SK-N-SH (cell line): ENCODE measurements at regions of chr5 and their contacts with region 1.

Region 1: DNA sequence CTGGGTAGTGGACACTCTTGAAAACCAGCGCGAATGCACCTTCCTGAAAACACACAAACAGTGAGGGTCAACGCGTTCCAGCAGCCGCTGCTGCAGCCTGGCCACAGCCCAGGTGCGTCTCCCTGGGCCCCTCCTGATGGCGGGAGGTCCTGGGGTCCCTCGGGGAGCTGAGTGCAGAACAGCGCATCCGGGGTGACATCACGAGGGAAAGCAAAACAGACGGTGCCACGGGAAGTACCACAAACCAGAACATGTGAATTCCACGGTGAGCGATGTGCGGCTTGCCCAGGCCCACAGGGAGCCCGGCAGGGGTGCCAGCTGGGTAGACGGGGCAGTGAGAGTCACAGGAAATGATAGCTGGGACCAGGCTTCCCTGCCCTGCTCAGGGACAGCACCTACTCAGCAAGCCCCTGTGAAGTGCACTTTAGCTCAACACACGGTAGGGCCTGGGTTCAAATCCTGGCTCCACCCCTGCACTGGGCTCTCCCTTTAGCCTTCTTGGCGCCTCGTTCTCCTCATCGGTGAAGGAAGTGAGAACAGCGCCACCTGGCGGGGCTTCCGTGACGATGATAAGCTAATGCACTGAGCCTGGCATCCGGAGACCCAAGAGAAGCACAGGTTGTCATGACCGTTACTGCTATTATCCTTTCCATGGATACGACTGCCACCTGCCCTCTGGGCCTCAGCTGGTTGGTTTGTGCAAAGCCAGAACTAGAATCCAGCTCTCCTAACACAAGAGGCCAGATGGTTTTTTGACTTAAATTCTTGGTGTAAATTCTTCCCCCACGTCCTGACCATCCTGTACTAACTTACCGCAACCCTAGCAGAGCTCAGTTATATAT is 24.6 kb downstream of the GFPT2 start:
- DNase-seq: peak; percentile 87
- H3K4me3 ChIP-seq: no peak overlapping the region; a peak in 1 of 4 replicates
- H3K27ac ChIP-seq: no peak overlapping the region
- H3K4me1 ChIP-seq: peaks cover 0 to 12% of the 10 kb centered on the region in 2 experiments; a peak in 2 of 4 replicates
- H3K27me3 ChIP-seq: no peaks in the 10 kb centered on the region
- CTCF ChIP-seq: peak; percentile 81
- EP300 ChIP-seq: no peak
- RAD21 ChIP-seq: peak; percentile 73

Region 2: GRCh38 chr5:180126726-180127681 is 201.5 kb before region 1 on chr5:
- CTCF ChIA-PET with region 1: interaction called, 34 read pairs
- POLR2A ChIA-PET with region 1: no interaction called
- DNase-seq: peak; percentile 92
- H3K4me3 ChIP-seq: peak overlapping the region; percentile 27 to 41; a peak in 2 of 4 replicates
- H3K27ac ChIP-seq: no peak overlapping the region
- H3K4me1 ChIP-seq: peaks cover 0 to 6% of the 10 kb centered on the region in 2 experiments; a peak in 1 of 4 replicates
- H3K27me3 ChIP-seq: peaks cover 9% of the 10 kb centered on the region; the same call in 1 of the 2 replicates
- CTCF ChIP-seq: peak; percentile 74
- EP300 ChIP-seq: no peak
- RAD21 ChIP-seq: peak; percentile 80

Region 3: DNA sequence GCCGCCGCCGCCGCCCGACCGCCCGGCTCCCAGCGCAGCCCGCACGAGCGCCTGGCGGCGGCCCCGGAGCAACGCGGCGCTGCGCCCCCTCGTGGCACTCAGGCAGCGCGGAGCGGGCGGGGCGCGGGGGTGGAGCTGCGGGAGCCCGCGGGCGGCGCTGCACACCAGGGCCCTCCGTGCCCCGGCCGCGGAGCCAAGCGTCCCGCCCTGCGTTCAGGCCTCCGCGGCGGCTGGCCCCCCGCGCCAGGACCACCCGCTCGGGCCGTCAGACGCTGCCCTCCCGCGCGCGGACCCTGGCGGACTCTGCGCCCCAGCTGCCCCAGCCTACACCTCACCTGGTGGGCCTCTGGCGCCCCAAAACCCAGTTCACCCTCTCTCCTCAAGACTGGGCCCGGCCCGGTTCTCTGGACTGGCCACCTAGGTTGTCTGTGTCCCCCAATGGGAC is 119.4 kb before region 1 on chr5 and contains the start of gene RASGEF1C:
- CTCF ChIA-PET with region 1: interaction called, 19 read pairs
- POLR2A ChIA-PET with region 1: no interaction called
- DNase-seq: peak; percentile 97
- H3K4me3 ChIP-seq: peak within 1 kb of the TSS; percentile 23 to 48; a peak in 3 of 4 replicates
- H3K27ac ChIP-seq: no peak within 1 kb of the TSS
- H3K4me1 ChIP-seq: peaks cover 0 to 19% of the 10 kb centered on the region in 2 experiments; a peak in 1 of 4 replicates
- H3K27me3 ChIP-seq: no peaks in the 10 kb centered on the region; the same call in 1 of the 2 replicates
- CTCF ChIP-seq: no peak
- EP300 ChIP-seq: no peak
- RAD21 ChIP-seq: peak; percentile 41
- polyA plus RNA-seq, gene RASGEF1C: not detected in 2 replicates

Region 4: GRCh38 chr5:180304431-180305375 is 23.8 kb before region 1 on chr5:
- CTCF ChIA-PET with region 1: interaction called, 15 read pairs
- POLR2A ChIA-PET with region 1: no interaction called
- DNase-seq: peak; percentile 74
- H3K4me3 ChIP-seq: no peak overlapping the region
- H3K27ac ChIP-seq: peak overlapping the region in 1 of 2 experiments; percentile 4; a peak in 1 of 4 replicates
- H3K4me1 ChIP-seq: peaks cover 0 to 19% of the 10 kb centered on the region in 2 experiments; a peak in 1 of 4 replicates
- H3K27me3 ChIP-seq: no peaks in the 10 kb centered on the region
- CTCF ChIP-seq: no peak
- EP300 ChIP-seq: peak in 1 of 2 experiments; percentile 43; a peak in 1 of 4 replicates
- RAD21 ChIP-seq: no peak

Region 5: GRCh38 chr5:180343831-180344327 is 15.4 kb after region 1 on chr5:
- CTCF ChIA-PET with region 1: interaction called, 89 read pairs
- POLR2A ChIA-PET with region 1: no interaction called
- DNase-seq: peak; percentile 60
- H3K4me3 ChIP-seq: no peak overlapping the region
- H3K27ac ChIP-seq: peak overlapping the region in 1 of 2 experiments; percentile 11; a peak in 1 of 4 replicates
- H3K4me1 ChIP-seq: peaks cover 0 to 21% of the 10 kb centered on the region in 2 experiments; a peak in 1 of 4 replicates
- H3K27me3 ChIP-seq: no peaks in the 10 kb centered on the region
- CTCF ChIP-seq: no peak
- EP300 ChIP-seq: no peak
- RAD21 ChIP-seq: no peak

Region 6: GRCh38 chr5:180370861-180371641 is 42.5 kb after region 1 on chr5:
- CTCF ChIA-PET with region 1: interaction called, 11 read pairs
- POLR2A ChIA-PET with region 1: no interaction called
- DNase-seq: no peak
- H3K4me3 ChIP-seq: no peak overlapping the region
- H3K27ac ChIP-seq: no peak overlapping the region
- H3K4me1 ChIP-seq: peaks cover 0 to 9% of the 10 kb centered on the region in 2 experiments; a peak in 1 of 4 replicates
- H3K27me3 ChIP-seq: no peaks in the 10 kb centered on the region
- CTCF ChIP-seq: no peak
- EP300 ChIP-seq: no peak
- RAD21 ChIP-seq: no peak